ENCODE measurements at regions of chr19 and their contacts with region 1.

Region 1: DNA sequence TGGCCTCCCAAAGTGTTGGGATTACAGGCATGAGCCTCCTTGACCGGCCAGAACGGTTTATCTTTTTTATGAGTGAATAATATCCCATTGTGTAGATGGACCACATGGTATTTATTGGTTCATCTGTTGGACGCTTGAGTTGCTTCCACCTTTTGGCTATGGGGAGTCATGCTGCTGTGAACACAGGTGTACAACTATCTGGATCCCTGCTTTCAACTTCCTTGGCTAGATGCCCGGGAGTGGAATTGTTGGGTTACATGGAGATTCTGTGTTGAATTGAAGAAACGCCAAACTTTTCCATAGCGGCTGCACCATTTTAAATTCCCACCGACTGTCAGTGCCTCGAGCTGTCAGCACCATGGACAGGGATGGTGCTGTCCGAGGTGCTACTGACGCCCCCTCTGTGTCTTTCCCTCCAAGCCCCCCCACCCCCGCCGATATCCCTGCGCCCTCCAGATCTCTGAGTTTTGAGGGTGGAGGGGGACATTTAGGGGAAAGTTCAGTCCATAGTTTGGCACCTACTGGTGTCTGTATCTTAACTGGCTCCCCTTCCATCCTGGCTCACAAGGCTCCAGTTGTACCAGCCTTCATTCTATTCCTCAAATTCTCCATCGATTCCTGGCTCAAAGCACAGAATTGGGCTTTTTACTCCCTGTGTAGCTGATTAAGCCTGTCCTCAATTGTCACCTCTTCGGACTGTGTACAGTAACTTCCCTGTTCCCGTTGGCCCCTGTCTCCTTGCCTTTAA is 27.3 kb downstream of the PNPLA6 start:
- DNase-seq: no peak
- H3K4me3 ChIP-seq: no peak overlapping the region
- H3K27ac ChIP-seq: no peak overlapping the region
- H3K27me3 ChIP-seq: no peaks in the 10 kb centered on the region
- CTCF ChIP-seq: no peak

Region 2: DNA sequence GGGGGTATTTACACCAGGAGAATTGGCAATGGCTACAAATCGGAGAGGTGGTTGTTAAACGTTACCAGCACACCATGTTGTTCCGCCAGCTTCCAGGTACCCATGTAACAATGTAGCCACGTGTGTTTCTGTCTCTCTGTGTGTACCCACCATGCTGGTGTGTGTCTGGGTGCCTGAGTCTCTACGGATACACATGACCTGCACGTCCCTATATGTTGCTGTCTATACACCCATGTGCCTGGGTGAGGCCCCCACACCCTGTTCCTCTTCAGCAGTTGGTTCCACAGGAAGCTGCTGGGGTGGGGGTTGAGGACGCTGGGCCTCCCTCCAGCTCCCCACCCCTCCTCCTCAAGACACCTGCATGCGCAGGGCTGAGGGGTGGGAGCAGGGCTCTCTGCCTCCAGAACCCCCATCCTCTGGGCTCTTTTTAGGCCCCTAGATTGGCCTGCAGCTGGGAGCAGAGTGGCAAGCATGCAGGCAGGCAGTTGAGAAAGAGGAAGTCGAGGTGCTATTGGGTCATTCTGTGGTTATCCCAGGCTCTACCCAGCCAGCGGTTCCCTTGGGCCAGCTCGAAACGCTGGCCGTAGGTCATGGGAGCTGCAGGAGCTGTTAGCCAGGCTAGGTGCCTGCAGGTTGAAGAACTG is 214.1 kb before region 1 on chr19 and contains the start of gene ARHGEF18:
- CTCF ChIA-PET with region 1: interaction called, 14 read pairs
- POLR2A ChIA-PET with region 1: no interaction called
- DNase-seq: no peak
- H3K4me3 ChIP-seq: no peak within 1 kb of the TSS
- H3K27ac ChIP-seq: no peak within 1 kb of the TSS
- H3K27me3 ChIP-seq: no peaks in the 10 kb centered on the region
- CTCF ChIP-seq: no peak
- polyA plus RNA-seq, gene ARHGEF18: 4.9 and 6.0 TPM in 2 replicates

Region 3: GRCh38 chr19:7434391-7434790 is 128.4 kb before region 1 on chr19:
- CTCF ChIA-PET with region 1: no interaction called
- POLR2A ChIA-PET with region 1: no interaction called
- DNase-seq: no peak
- H3K4me3 ChIP-seq: no peak overlapping the region
- H3K27ac ChIP-seq: no peak overlapping the region
- H3K27me3 ChIP-seq: no peaks in the 10 kb centered on the region
- CTCF ChIP-seq: no peak

Region 4: DNA sequence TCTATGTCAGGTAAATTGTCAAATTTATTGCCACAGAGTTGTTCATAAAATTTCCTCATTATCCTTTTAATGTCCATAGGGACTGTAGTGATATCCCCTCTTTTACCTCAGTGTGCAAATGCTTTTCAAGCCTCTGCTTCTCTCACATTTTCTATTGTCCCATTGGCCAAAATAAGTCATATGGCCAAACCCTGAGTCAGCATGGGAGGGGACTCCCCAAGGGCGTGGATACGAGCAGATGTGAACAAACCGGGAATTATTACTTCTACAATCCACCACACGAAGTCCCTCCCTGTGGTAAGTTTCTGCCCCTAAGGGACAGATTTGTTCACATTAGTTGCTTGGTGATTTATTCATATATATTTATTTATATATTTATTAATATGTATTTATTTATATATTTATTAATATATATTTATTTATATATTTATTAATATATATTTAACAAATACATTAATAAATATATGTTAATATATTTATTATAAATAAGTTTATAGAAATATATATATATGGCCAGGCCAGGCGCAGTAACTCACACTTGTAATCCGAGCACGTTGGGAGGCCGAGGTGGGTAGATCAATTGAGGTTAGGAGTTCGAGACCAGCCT is 12.7 kb after region 1 on chr19:
- CTCF ChIA-PET with region 1: interaction called, 12 read pairs
- POLR2A ChIA-PET with region 1: no interaction called
- DNase-seq: no peak
- H3K4me3 ChIP-seq: no peak overlapping the region
- H3K27ac ChIP-seq: no peak overlapping the region
- H3K27me3 ChIP-seq: peaks cover 2% of the 10 kb centered on the region
- CTCF ChIP-seq: no peak

Region 5: GRCh38 chr19:7629347-7630054 is 66.7 kb after region 1 on chr19 and contains the starts of genes PET100 and XAB2:
- CTCF ChIA-PET with region 1: interaction called, 14 read pairs
- POLR2A ChIA-PET with region 1: no interaction called
- DNase-seq: peak; percentile 97
- H3K4me3 ChIP-seq: peak within 1 kb of the TSS; percentile 97
- H3K27ac ChIP-seq: peak within 1 kb of the TSS; percentile 70
- H3K27me3 ChIP-seq: no peaks in the 10 kb centered on the region
- CTCF ChIP-seq: no peak
- polyA plus RNA-seq, gene PET100: 39.7 and 46.7 TPM in 2 replicates
- polyA plus RNA-seq, gene XAB2: 16.3 and 21.8 TPM in 2 replicates

Region 6: DNA sequence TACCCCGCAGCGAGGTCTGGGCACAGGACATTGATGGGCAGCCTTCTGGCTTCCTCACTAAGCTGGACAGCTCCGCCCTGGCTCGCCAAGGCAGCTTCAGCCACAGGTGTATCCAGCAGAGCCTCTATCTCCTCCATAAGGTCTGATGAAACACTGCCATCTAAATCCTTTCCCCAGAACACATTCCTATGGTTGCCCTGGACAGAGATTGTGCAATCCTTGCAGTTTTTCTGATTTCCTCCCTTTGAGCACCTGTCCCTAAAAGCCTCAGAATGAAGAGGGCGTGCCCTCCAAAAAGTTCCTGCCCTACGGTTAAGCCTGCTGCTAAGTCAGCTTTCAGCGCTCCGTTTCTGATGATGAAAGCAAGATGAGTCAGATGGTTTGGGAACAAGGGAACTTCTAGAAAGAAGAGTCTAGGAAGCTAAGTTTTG is 221.2 kb after region 1 on chr19:
- CTCF ChIA-PET with region 1: interaction called, 13 read pairs
- POLR2A ChIA-PET with region 1: no interaction called
- DNase-seq: peak; percentile 8
- H3K4me3 ChIP-seq: no peak overlapping the region
- H3K27ac ChIP-seq: no peak overlapping the region
- H3K27me3 ChIP-seq: peaks cover 31% of the 10 kb centered on the region
- CTCF ChIP-seq: no peak